ENCODE measurements at regions of chr10 and their contacts with region 1.

Region 1: GRCh38 chr10:70925377-70926225 is 37.2 kb upstream of the PCBD1 start:
- DNase-seq: peak; percentile 51
- H3K4me3 Mint-ChIP-seq: no peak overlapping the region
- H3K27ac Mint-ChIP-seq: no peak overlapping the region
- H3K4me1 Mint-ChIP-seq: peaks cover 1% of the 10 kb centered on the region
- H3K27me3 Mint-ChIP-seq: peaks cover 2% of the 10 kb centered on the region

Region 2: DNA sequence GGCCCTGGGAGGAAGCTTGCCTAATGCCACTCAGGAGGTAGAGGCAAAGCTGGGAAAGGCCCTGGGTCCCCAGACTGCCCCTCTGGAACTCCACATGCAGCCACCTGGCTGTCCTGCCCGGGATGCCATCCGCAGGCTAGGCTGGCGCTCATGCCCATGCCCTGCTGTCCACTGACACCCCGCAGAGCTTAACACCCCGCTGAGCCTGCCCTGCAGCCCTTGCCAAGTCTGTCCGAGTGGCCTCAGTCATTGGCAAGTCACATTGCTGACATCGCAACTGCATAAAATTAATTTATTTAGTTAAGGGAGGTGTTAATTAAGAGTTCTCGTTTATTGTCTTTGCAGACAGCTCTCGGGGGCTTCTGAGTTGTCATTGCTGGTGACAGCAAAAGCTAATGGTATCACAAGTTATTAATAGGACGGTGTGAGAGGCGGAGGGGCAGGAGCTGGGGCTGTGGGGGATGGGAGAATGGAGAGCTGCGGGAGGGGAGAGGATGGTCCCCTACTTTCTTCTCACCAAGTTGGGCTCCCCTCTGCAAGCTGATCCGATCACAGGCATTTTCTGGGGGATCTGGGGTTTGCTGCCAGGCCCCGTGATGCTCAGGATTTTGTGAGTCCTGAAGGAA is 18.4 kb after region 1 on chr10:
- CTCF ChIA-PET with region 1: interaction called, 12 read pairs
- POLR2A ChIA-PET with region 1: no interaction called
- DNase-seq: no peak
- H3K4me3 Mint-ChIP-seq: no peak overlapping the region
- H3K27ac Mint-ChIP-seq: no peak overlapping the region
- H3K4me1 Mint-ChIP-seq: no peaks in the 10 kb centered on the region
- H3K27me3 Mint-ChIP-seq: no peaks in the 10 kb centered on the region